Right lobe of liver (tissue), 6 donors: ENCODE measurements at regions of chr20 and their contacts with region 1.

Region 1: DNA sequence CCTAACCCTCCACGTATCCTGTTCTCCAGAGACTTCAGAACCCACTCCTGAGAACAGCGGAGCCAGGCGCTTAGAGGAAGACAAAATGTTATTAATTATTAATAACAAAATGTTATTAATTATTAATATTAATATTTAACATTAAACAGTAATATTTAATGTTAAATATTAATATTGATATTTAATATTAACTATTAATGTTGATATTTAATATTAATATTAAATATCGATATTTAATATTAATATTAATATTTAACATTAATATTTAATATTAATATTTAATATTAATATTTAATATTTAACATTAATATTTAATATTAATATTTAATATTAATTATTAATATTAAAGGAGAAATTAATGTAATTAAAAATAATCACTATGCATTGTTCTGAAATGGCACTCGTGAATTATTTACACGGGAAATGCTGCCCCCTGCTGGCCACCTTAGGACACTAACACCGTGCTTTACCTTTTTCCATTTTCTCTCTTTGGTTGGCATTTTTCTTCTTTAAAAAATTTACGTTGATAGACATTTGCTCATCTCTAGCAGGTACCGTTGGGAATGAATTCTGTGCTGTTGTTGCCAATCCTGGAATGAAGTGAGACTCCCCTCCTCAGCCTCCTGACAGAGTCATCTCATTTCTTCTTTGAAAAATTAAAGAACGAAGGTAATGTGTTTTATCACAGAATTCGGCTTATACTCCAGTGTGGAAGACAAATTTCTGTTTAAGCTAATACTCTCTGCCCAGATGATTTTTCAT is 7.5 kb upstream of the GGTLC1 start:
- DNase-seq: peak in 2 of 3 donors; percentile 49 to 63
- ATAC-seq: peak in 3 of 4 donors; percentile 47 to 54 (median 51)
- H3K4me3 ChIP-seq: no peak overlapping the region
- H3K27ac ChIP-seq: no peak overlapping the region
- H3K4me1 ChIP-seq: no peaks in the 10 kb centered on the region
- H3K27me3 ChIP-seq: peaks cover 0 to 3% of the 10 kb centered on the region in 2 donors
- CTCF ChIP-seq: peak; percentile 61 to 92 (median 88)
- POLR2A ChIP-seq: no peak

Region 2: DNA sequence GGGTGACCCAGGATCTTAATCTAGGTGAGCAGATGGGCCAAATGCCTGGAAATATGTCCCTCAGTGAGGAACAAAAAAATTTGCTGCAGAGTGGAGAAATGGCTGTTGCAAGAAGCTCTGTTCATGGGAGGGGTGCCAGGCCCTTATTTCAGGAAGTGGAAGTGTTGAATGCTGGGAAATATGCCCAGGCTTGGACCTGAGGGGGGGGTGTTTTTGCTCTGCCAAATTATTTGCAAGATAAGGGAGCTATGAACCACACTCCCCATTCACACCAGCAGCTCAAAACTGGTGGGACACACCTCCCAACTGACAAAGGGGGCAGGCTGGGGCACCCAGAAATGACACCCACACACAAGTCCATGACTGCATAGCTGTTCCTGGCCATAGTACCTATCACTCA is 315.9 kb before region 1 on chr20:
- intact Hi-C with region 1: no loop called
- DNase-seq: no peak
- ATAC-seq: peak in 1 of 4 donors; percentile 38
- H3K4me3 ChIP-seq: no peak overlapping the region
- H3K27ac ChIP-seq: no peak overlapping the region
- H3K4me1 ChIP-seq: no peaks in the 10 kb centered on the region
- H3K27me3 ChIP-seq: no peaks in the 10 kb centered on the region
- CTCF ChIP-seq: no peak
- POLR2A ChIP-seq: no peak

Region 3: GRCh38 chr20:23937303-23938117 is 58.6 kb before region 1 on chr20:
- intact Hi-C with region 1: loop called in 1 of 2 experiments (anchors 10 kb)
- DNase-seq: peak in 2 of 3 donors; percentile 37 to 70
- ATAC-seq: peak; percentile 97 to 100 (median 99)
- H3K4me3 ChIP-seq: no peak overlapping the region
- H3K27ac ChIP-seq: no peak overlapping the region
- H3K4me1 ChIP-seq: no peaks in the 10 kb centered on the region
- H3K27me3 ChIP-seq: no peaks in the 10 kb centered on the region
- CTCF ChIP-seq: peak; percentile 73 to 89 (median 86)
- POLR2A ChIP-seq: no peak

Region 4: GRCh38 chr20:24027229-24027628 is 31.1 kb after region 1 on chr20:
- intact Hi-C with region 1: no loop called
- DNase-seq: peak in 2 of 3 donors; percentile 48 to 72
- ATAC-seq: peak; percentile 75 to 89 (median 85)
- H3K4me3 ChIP-seq: no peak overlapping the region
- H3K27ac ChIP-seq: peak overlapping the region in 1 of 3 donors; percentile 20
- H3K4me1 ChIP-seq: no peaks in the 10 kb centered on the region
- H3K27me3 ChIP-seq: no peaks in the 10 kb centered on the region
- CTCF ChIP-seq: no peak
- POLR2A ChIP-seq: no peak

Region 5: DNA sequence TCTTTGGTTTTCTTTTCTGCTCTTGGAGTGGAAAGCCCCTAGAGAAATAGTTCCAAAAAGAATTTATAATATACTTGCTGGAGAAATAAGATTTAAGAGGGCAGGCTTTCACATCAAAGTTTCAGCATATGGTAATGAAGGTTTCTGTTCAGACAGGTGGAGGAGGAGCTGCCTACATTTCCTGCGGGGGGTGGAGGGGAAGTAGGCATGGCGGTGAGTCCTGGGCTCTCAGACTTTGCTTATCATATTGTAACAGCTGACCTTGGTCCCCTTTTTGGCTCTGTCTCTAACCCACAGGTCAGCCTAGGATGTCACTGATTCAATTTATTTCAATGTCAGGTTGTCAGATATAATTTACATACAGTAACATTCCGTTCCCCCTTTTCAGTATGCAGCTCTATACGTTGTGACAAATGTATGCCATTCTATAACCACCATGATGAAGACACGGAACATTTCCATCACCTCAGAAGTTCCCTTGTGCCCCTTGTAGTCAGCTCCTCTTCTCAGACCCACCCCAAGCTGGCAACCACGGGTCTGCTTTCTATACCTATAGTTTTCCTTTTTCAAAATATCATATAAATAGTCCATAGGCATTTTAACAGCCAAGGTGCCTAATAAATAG is 70.1 kb after region 1 on chr20:
- intact Hi-C with region 1: no loop called
- DNase-seq: no peak
- ATAC-seq: no peak
- H3K4me3 ChIP-seq: no peak overlapping the region
- H3K27ac ChIP-seq: no peak overlapping the region
- H3K4me1 ChIP-seq: no peaks in the 10 kb centered on the region
- H3K27me3 ChIP-seq: no peaks in the 10 kb centered on the region
- CTCF ChIP-seq: no peak
- POLR2A ChIP-seq: no peak